ENCODE measurements at regions of chr9 and their contacts with region 1.

Region 1: GRCh38 chr9:5886114-5886939 is 4.4 kb upstream of the MLANA start:
- DNase-seq: no peak
- H3K4me3 ChIP-seq: no peak overlapping the region
- H3K27me3 ChIP-seq: no peaks in the 10 kb centered on the region
- CTCF ChIP-seq: peak; percentile 97

Region 2: DNA sequence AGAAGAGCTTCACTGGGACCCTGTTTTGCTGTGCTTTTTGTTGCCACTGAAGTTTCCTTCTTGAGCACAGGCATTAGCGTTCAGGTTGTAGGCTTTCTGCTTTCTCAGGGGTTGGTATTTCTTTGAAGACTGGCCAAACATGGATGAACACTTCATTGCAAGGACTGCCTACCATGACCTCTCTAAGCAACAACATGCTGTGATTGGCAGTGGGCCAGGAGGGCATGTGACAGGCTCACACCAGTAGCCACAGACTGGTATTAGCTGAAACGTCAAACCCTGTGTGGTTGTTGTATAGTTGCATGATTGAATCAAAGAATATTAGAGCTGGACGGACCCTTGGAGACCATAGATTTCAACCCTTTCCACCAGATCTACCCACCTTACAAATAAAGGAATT is 15.6 kb before region 1 on chr9:
- CTCF ChIA-PET with region 1: interaction called, 10 read pairs
- POLR2A ChIA-PET with region 1: no interaction called
- DNase-seq: no peak
- H3K4me3 ChIP-seq: no peak overlapping the region
- H3K27me3 ChIP-seq: no peaks in the 10 kb centered on the region
- CTCF ChIP-seq: no peak

Region 3: DNA sequence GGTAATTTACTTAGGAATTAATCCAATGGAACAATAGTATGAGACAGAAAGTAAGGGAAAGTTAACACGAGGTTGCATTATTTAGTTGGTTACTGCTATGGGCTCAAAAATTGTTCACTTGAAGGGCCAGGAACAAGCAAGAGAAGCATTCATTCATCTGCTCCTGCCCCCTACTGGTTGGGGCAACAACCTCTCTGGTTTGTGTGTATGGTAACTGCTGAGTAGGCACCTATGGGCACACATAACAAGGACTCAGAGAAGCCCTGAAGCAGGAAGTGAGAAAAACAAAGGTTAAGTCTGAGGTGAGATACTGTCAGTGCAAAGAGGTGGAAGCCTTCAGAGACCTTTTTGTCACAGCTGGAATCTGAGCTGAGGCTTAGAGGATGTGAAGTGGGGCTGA is 163.5 kb after region 1 on chr9:
- CTCF ChIA-PET with region 1: interaction called, 51 read pairs
- POLR2A ChIA-PET with region 1: no interaction called
- DNase-seq: no peak
- H3K4me3 ChIP-seq: no peak overlapping the region
- H3K27me3 ChIP-seq: peaks cover 7% of the 10 kb centered on the region
- CTCF ChIP-seq: peak; percentile 32; the same call in 1 of the 2 replicates

Region 4: GRCh38 chr9:6305954-6306563 is 419.7 kb after region 1 on chr9:
- CTCF ChIA-PET with region 1: interaction called, 17 read pairs
- POLR2A ChIA-PET with region 1: no interaction called
- DNase-seq: no peak
- H3K4me3 ChIP-seq: no peak overlapping the region
- H3K27me3 ChIP-seq: no peaks in the 10 kb centered on the region
- CTCF ChIP-seq: peak; percentile 42

Measured in BJ (cell line).